Dendritic cell treated with granulocyte-macrophage colony-stimulating factor and Interleukin-4, amounts not matched to agents 40 ng/mL and 50 ng/mL, for 4 days (primary cell): ENCODE measurements at regions of chr2 and their contacts with region 1.

Region 1: DNA sequence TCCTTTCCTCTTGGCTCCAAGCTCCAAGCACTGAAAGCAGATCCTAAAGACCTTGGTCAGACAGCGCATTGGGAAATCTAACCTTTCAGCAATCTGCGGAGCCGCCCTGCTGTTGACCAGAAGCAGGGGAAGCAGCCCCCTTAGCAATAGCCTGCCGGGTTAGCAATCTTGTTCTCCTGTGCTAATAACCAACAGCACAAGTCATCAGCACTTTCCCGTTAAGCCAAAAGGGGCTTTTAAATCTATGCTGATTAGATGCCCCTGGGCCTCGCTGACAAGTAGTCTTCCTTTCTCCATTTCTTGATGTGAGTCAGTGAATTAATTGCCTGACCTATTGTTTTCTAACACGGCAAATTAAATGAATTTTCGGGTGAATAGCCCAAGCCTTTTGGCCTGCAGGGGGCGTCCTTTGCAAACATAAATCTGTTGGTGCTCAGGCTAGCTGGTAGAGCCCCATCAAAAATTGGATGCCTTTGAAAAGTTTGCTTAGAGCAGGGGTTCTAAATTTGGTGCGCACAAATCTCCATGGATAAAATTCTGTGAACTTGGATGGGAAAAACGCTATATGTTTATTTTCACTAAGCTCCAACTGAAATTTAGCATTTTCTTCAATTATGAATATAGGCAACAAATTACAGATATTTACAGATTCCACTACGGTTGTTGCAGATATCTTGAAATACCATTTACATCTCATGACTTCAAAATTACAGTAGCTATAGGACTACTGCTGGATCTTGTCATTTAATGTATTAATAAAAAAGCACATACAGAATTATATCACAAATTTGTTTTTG is 24.6 kb downstream of the MAIP1 start:
- H3K4me3 Mint-ChIP-seq: no peak overlapping the region
- H3K27ac Mint-ChIP-seq: no peak overlapping the region
- H3K4me1 Mint-ChIP-seq: peaks cover 12% of the 10 kb centered on the region
- H3K27me3 Mint-ChIP-seq: peaks cover 4% of the 10 kb centered on the region

Region 2: GRCh38 chr2:199668645-199669044 is 311.4 kb before region 1 on chr2:
- intact Hi-C with region 1: no loop called
- H3K4me3 Mint-ChIP-seq: no peak overlapping the region
- H3K27ac Mint-ChIP-seq: no peak overlapping the region
- H3K4me1 Mint-ChIP-seq: no peaks in the 10 kb centered on the region
- H3K27me3 Mint-ChIP-seq: no peaks in the 10 kb centered on the region

Region 3: GRCh38 chr2:200454927-200455801 is 475.1 kb after region 1 on chr2:
- intact Hi-C with region 1: no loop called
- H3K4me3 Mint-ChIP-seq: no peak overlapping the region
- H3K27ac Mint-ChIP-seq: peak overlapping the region; percentile 95
- H3K4me1 Mint-ChIP-seq: peaks cover 46% of the 10 kb centered on the region
- H3K27me3 Mint-ChIP-seq: no peaks in the 10 kb centered on the region

Region 4: DNA sequence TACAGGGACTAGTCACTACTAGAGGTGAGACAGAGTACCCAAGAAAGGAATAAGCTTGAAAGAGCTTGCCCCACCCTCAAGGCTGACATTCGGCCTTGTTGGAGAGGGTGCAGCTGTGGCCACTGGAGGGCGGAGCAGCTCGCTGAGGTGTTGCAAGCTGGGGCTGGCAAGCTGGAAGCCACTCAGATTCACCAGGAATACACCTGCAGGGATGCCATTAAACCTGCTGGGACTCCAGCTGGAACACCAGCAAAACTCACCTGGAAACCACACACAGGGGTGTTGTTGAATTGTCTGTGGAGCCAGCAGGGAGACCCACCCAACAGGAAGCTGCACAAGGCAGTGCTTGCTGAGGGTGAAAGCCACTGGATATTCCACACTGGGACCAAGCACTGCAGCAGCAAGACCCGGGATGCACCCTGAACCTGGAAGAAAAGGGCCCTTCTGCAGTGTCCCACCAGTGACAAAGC is 503.7 kb after region 1 on chr2:
- intact Hi-C with region 1: loop called (anchors 1 kb)
- H3K4me3 Mint-ChIP-seq: no peak overlapping the region
- H3K27ac Mint-ChIP-seq: no peak overlapping the region
- H3K4me1 Mint-ChIP-seq: no peaks in the 10 kb centered on the region
- H3K27me3 Mint-ChIP-seq: no peaks in the 10 kb centered on the region

Region 5: DNA sequence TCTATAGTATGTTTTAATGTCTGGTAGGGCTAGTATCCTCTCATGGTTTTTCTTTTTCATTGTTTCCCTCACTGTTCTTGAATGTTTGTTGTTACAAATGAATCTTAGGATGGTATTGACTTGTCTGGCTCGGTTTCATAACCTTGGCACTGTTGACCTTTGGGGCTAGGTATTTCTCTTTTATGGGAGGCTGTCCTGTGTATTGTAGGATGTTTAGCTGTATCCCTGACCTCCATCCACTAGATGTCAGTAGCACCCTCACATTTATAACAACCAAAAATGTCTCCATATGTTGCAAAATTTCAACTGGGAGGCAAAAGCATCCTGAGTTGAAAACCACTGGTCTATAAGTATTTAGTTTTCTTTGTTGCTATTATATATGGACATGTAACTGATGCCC is 598.7 kb after region 1 on chr2:
- intact Hi-C with region 1: loop called (anchors 10 kb)
- H3K4me3 Mint-ChIP-seq: no peak overlapping the region
- H3K27ac Mint-ChIP-seq: no peak overlapping the region
- H3K4me1 Mint-ChIP-seq: no peaks in the 10 kb centered on the region
- H3K27me3 Mint-ChIP-seq: no peaks in the 10 kb centered on the region

Region 6: GRCh38 chr2:200703127-200703925 is 723.3 kb after region 1 on chr2:
- intact Hi-C with region 1: loop called (anchors 2 kb)
- H3K4me3 Mint-ChIP-seq: no peak overlapping the region
- H3K27ac Mint-ChIP-seq: no peak overlapping the region
- H3K4me1 Mint-ChIP-seq: no peaks in the 10 kb centered on the region
- H3K27me3 Mint-ChIP-seq: no peaks in the 10 kb centered on the region